ENCODE measurements at regions of chr3 and their contacts with region 1.

Region 1: GRCh38 chr3:162602608-162603007 is 1106.0 kb downstream of the OTOL1 start:
- DNase-seq: no peak
- H3K4me3 ChIP-seq: no peak overlapping the region
- H3K27ac ChIP-seq: no peak overlapping the region
- H3K4me1 ChIP-seq: no peaks in the 10 kb centered on the region
- H3K27me3 ChIP-seq: no peaks in the 10 kb centered on the region
- CTCF ChIP-seq: no peak
- POLR2A ChIP-seq: no peak

Region 2: GRCh38 chr3:162041622-162042021 is 561.0 kb before region 1 on chr3:
- CTCF ChIA-PET with region 1: no interaction called
- POLR2A ChIA-PET with region 1: no interaction called
- dilution Hi-C with region 1: no loop called
- intact Hi-C with region 1: loop called (anchors 5 kb)
- DNase-seq: no peak
- H3K4me3 ChIP-seq: no peak overlapping the region
- H3K27ac ChIP-seq: no peak overlapping the region
- H3K4me1 ChIP-seq: no peaks in the 10 kb centered on the region
- H3K27me3 ChIP-seq: no peaks in the 10 kb centered on the region
- CTCF ChIP-seq: no peak
- POLR2A ChIP-seq: no peak

Region 3: GRCh38 chr3:162171970-162172369 is 430.6 kb before region 1 on chr3:
- CTCF ChIA-PET with region 1: no interaction called
- POLR2A ChIA-PET with region 1: no interaction called
- dilution Hi-C with region 1: no loop called
- intact Hi-C with region 1: no loop called
- DNase-seq: no peak
- H3K4me3 ChIP-seq: no peak overlapping the region
- H3K27ac ChIP-seq: no peak overlapping the region
- H3K4me1 ChIP-seq: no peaks in the 10 kb centered on the region
- H3K27me3 ChIP-seq: no peaks in the 10 kb centered on the region
- CTCF ChIP-seq: no peak
- POLR2A ChIP-seq: no peak

Region 4: DNA sequence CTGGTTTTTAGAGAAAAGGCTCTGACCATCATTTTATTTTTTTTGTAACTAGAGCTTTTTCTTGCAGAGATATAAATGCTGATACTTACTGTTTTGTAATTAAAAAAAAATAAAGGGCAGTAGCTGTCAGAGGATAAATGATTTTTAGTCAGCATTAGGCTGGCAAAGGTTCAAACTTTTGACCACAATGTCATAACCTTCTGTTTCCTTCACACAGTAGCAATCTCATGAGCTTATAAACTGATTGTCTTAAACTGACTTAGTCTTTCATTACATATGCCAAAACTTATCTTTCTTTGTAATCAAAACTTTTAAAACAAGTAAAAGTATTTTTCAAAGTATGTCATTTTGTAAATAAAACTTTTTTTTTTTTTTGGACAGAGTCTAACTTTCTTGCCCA is 264.1 kb before region 1 on chr3:
- CTCF ChIA-PET with region 1: no interaction called
- POLR2A ChIA-PET with region 1: no interaction called
- dilution Hi-C with region 1: no loop called
- intact Hi-C with region 1: no loop called
- DNase-seq: no peak
- H3K4me3 ChIP-seq: no peak overlapping the region
- H3K27ac ChIP-seq: no peak overlapping the region
- H3K4me1 ChIP-seq: no peaks in the 10 kb centered on the region
- H3K27me3 ChIP-seq: no peaks in the 10 kb centered on the region
- CTCF ChIP-seq: no peak
- POLR2A ChIP-seq: no peak